Caco-2 (cell line): ENCODE measurements at regions of chr12 and their contacts with region 1.

Region 1: DNA sequence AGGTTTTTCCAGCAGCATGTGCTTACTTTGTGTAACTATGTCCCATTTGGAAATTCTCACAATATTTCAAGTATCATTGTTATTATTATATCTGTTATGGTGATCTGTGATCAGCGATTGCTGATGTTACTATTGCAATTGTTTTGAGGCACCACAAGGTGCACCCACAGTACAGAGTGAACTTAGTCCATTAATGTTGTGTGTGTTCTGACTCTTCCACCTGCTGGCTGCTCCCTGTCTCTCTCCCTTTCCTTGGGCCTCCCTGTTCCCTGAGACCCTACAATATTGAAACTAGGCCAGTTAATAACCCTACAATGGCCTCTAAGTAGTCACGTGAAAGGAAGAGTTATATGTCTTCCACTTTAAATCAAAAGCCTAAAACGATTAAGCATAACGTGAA is 153.9 kb downstream of the PIK3C2G start:
- DNase-seq: peak in 1 of 2 experiments; percentile 9
- H3K4me3 ChIP-seq: no peak overlapping the region
- H3K4me3 Mint-ChIP-seq: no peak overlapping the region
- H3K27ac Mint-ChIP-seq: no peak overlapping the region
- H3K4me1 ChIP-seq: no peaks in the 10 kb centered on the region
- H3K4me1 Mint-ChIP-seq: no peaks in the 10 kb centered on the region
- H3K27me3 ChIP-seq: no peaks in the 10 kb centered on the region
- H3K27me3 Mint-ChIP-seq: peaks cover 4% of the 10 kb centered on the region
- CTCF ChIP-seq: peak; percentile 10 to 19

Region 2: GRCh38 chr12:18250313-18250916 is 164.8 kb before region 1 on chr12:
- CTCF ChIA-PET with region 1: no interaction called
- POLR2A ChIA-PET with region 1: no interaction called
- intact Hi-C with region 1: loop called (anchors 5 kb)
- DNase-seq: peak in 1 of 2 experiments; percentile 67
- H3K4me3 ChIP-seq: no peak overlapping the region
- H3K4me3 Mint-ChIP-seq: no peak overlapping the region
- H3K27ac Mint-ChIP-seq: no peak overlapping the region
- H3K4me1 ChIP-seq: no peaks in the 10 kb centered on the region
- H3K4me1 Mint-ChIP-seq: no peaks in the 10 kb centered on the region
- H3K27me3 ChIP-seq: no peaks in the 10 kb centered on the region
- H3K27me3 Mint-ChIP-seq: peaks cover 9% of the 10 kb centered on the region
- CTCF ChIP-seq: peak; percentile 80 to 93